ENCODE measurements at regions of chr4 and their contacts with region 1.

Region 1: GRCh38 chr4:27048429-27049238 is 188.0 kb downstream of the STIM2 start:
- DNase-seq: no peak
- H3K4me3 ChIP-seq: no peak overlapping the region
- H3K27ac ChIP-seq: no peak overlapping the region
- H3K4me1 ChIP-seq: peaks cover 0 to 4% (median 1%) of the 10 kb centered on the region in 4 experiments; a peak in 2 of 7 replicates
- H3K27me3 ChIP-seq: no peaks in the 10 kb centered on the region
- CTCF ChIP-seq: peak in 2 of 3 experiments; percentile 42 to 48; a peak in 2 of 4 replicates
- EP300 ChIP-seq: no peak
- POLR2A ChIP-seq: no peak
- RAD21 ChIP-seq: peak; percentile 82

Region 2: GRCh38 chr4:27068151-27068867 is 19.7 kb after region 1 on chr4:
- CTCF ChIA-PET with region 1: interaction called, 10 read pairs
- POLR2A ChIA-PET with region 1: no interaction called
- DNase-seq: peak in 1 of 2 experiments; percentile 14
- H3K4me3 ChIP-seq: no peak overlapping the region
- H3K27ac ChIP-seq: no peak overlapping the region
- H3K4me1 ChIP-seq: no peaks in the 10 kb centered on the region
- H3K27me3 ChIP-seq: no peaks in the 10 kb centered on the region; a peak in 1 of 7 replicates
- CTCF ChIP-seq: no peak
- EP300 ChIP-seq: no peak
- POLR2A ChIP-seq: no peak
- RAD21 ChIP-seq: no peak

Region 3: DNA sequence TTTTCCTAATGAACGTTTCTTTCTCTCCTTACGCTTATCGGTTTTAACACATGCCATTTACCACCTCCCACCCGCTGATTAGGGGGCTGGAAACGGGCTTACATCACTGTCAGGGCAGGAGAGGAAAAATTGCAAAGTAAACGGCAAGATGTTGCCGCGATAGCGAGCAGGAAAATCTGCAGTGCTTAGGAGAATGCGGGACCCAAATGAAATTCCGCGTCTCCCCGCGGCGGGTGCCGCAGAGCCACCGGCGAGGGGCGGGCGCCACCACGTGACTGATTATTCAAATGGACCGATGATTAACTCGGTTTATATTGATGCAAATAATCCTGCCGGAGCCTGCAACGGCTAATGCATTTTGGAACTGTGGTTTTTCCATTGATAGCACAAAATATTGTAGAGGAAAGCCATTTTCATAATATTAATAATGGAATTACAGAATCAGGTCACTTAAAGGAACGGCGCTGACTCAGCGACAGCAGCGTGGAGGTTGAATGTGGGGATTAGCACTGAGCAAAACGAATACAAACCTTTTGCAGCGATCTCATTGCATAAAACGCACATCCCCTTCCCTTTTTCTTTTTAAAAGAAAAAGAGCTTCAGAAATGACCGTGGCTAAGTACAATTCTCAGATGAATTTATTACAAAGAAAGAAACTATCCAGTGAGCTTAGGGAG is 36.2 kb after region 1 on chr4:
- CTCF ChIA-PET with region 1: interaction called, 27 read pairs
- POLR2A ChIA-PET with region 1: no interaction called
- DNase-seq: peak in 1 of 2 experiments; percentile 73
- H3K4me3 ChIP-seq: peak overlapping the region; percentile 35 to 63 (median 51)
- H3K27ac ChIP-seq: no peak overlapping the region
- H3K4me1 ChIP-seq: peaks cover 4 to 23% (median 17%) of the 10 kb centered on the region in 4 experiments; a peak in 5 of 7 replicates
- H3K27me3 ChIP-seq: peaks cover 0 to 23% (median 15%) of the 10 kb centered on the region in 4 experiments; a peak in 6 of 7 replicates
- CTCF ChIP-seq: peak; percentile 6 to 28 (median 11); a peak in 3 of 4 replicates
- EP300 ChIP-seq: no peak
- POLR2A ChIP-seq: no peak
- RAD21 ChIP-seq: peak; percentile 57 to 62

Region 4: GRCh38 chr4:27096142-27096824 is 47.6 kb after region 1 on chr4:
- CTCF ChIA-PET with region 1: interaction called, 28 read pairs
- POLR2A ChIA-PET with region 1: no interaction called
- DNase-seq: no peak
- H3K4me3 ChIP-seq: no peak overlapping the region
- H3K27ac ChIP-seq: no peak overlapping the region
- H3K4me1 ChIP-seq: peaks cover 2 to 10% (median 9%) of the 10 kb centered on the region in 4 experiments; a peak in 5 of 7 replicates
- H3K27me3 ChIP-seq: no peaks in the 10 kb centered on the region; a peak in 1 of 7 replicates
- CTCF ChIP-seq: peak in 1 of 3 experiments; percentile 2; a peak in 1 of 4 replicates
- EP300 ChIP-seq: no peak
- POLR2A ChIP-seq: no peak
- RAD21 ChIP-seq: peak; percentile 48 to 65